HEK293 (cell line): ENCODE measurements at regions of chr13 and their contacts with region 1.

Region 1: DNA sequence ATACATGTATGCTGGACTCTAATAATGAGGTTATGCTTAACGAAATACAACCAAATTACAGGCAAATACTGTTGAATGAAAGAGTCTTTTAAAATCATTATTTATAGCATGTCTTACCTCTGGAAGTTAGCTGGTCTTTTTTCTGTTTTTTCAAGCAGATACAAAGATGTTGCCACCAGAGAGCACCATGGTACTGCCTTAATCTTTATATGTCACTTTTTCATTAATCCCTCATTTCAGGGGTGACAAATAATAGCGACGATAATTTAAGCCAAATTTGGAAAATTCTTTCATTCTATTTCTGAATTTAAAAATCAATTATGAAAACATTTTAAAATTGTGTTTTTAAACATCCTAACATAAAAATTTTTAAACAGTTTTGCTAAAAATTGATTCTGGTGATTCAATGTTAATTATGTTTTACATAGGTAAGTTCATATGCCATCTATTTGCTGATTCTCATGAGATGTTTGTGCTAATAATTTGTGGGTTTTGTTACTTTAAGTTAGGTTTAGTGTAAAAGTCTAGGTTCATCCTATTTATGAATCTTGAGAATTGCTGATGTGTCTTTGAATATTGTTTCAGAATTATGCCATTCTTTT is 379.3 kb upstream of the SGCG start:
- H3K4me3 ChIP-seq: no peak overlapping the region
- H3K27ac ChIP-seq: no peak overlapping the region
- H3K4me1 ChIP-seq: no peaks in the 10 kb centered on the region
- CTCF ChIP-seq: no peak

Region 2: GRCh38 chr13:23020223-23020843 is 218.8 kb after region 1 on chr13:
- CTCF ChIA-PET with region 1: interaction called, 15 read pairs
- POLR2A ChIA-PET with region 1: no interaction called
- H3K4me3 ChIP-seq: no peak overlapping the region
- H3K27ac ChIP-seq: no peak overlapping the region
- H3K4me1 ChIP-seq: no peaks in the 10 kb centered on the region
- CTCF ChIP-seq: peak; percentile 47; the same call in 1 of the 2 replicates